Ascending aorta (tissue), 2 donors: ENCODE measurements at regions of chr16 and their contacts with region 1.

Region 1: GRCh38 chr16:48623304-48624016 is 13.5 kb upstream of the N4BP1 start:
- DNase-seq: peak; percentile 46 to 89
- H3K4me3 ChIP-seq: peak overlapping the region; percentile 46 to 59
- H3K27ac ChIP-seq: peak overlapping the region; percentile 48 to 60
- H3K4me1 ChIP-seq: peaks cover 0 to 8% of the 10 kb centered on the region in 2 donors
- H3K27me3 ChIP-seq: no peaks in the 10 kb centered on the region
- CTCF ChIP-seq: peak; percentile 92 to 100 (median 99)

Region 2: DNA sequence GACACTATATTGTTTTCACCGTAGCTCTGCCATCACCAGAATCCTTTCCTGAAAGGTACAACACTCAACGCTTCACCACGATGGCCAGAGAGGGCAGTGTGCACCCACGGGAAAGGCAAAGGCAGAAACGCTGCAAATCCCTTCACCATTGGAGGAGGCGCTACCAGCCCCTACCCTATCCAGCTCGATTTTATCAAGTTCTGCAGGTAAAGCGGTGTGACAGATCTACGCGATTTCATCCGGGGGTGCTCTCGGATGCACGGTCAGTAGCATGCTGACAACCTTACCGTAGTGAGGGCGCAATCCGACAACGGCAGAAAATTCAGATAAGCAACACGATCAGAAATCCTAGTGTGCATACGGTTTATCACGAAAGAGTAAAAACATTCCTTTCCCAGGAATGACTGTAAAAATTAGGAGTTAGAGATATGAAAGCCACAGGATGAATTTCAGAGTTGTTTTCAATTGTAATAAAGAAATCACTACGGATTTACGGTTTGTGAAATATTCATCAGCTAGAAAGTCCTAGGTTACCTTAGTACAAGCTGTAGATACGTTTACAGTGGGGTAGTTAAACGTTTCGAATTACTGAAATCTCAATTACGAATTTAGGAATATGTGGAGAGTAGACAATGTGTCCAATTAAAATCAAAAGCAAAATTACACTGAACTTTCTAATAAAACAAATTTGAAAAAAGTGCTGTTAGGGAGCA is 1481.5 kb before region 1 on chr16:
- intact Hi-C with region 1: loop called (anchors 5 kb)
- DNase-seq: peak; percentile 35 to 83
- H3K4me3 ChIP-seq: peak overlapping the region; percentile 44 to 77
- H3K27ac ChIP-seq: no peak overlapping the region
- H3K4me1 ChIP-seq: peaks cover 9% of the 10 kb centered on the region in 2 donors
- H3K27me3 ChIP-seq: no peaks in the 10 kb centered on the region
- CTCF ChIP-seq: peak; percentile 73 to 89 (median 78)

Region 3: GRCh38 chr16:48246066-48246465 is 377.4 kb before region 1 on chr16:
- intact Hi-C with region 1: no loop called
- DNase-seq: no peak
- H3K4me3 ChIP-seq: peak overlapping the region in 1 of 2 donors; percentile 75
- H3K27ac ChIP-seq: no peak overlapping the region
- H3K4me1 ChIP-seq: peaks cover 0 to 24% of the 10 kb centered on the region in 2 donors
- H3K27me3 ChIP-seq: no peaks in the 10 kb centered on the region
- CTCF ChIP-seq: no peak

Region 4: DNA sequence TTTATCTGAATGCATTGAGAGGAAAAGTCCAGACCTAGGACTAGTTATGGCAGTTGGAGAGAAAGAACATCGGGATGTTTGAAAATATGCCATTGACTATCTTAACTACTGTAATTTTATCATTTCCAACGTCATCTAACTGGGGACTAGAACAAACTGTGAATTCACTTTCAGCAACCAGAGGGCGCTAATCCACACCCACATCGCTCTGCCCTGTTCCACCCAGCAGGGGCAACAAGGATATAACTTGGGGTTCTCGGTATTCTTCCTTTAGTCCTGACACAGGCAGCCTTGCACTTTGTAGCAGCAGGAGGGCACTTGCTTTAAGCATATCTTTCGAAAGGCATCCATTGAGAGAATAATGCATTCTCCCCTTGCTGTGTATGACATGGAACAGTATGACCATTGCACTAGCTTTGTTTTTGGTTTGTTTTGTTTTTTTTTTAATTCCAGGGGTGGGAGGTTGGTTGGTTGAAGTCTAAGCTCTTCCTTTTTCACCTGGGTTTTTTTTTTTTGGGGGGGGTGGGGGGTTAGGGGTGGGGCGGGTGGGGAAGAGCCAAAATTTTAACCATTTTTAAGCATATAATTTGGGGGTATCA is 269.8 kb before region 1 on chr16:
- intact Hi-C with region 1: loop called (anchors 2 kb)
- DNase-seq: peak in 1 of 2 donors; percentile 75
- H3K4me3 ChIP-seq: no peak overlapping the region
- H3K27ac ChIP-seq: no peak overlapping the region
- H3K4me1 ChIP-seq: peaks cover 0 to 3% of the 10 kb centered on the region in 2 donors
- H3K27me3 ChIP-seq: no peaks in the 10 kb centered on the region
- CTCF ChIP-seq: peak; percentile 71 to 86 (median 82)

Region 5: DNA sequence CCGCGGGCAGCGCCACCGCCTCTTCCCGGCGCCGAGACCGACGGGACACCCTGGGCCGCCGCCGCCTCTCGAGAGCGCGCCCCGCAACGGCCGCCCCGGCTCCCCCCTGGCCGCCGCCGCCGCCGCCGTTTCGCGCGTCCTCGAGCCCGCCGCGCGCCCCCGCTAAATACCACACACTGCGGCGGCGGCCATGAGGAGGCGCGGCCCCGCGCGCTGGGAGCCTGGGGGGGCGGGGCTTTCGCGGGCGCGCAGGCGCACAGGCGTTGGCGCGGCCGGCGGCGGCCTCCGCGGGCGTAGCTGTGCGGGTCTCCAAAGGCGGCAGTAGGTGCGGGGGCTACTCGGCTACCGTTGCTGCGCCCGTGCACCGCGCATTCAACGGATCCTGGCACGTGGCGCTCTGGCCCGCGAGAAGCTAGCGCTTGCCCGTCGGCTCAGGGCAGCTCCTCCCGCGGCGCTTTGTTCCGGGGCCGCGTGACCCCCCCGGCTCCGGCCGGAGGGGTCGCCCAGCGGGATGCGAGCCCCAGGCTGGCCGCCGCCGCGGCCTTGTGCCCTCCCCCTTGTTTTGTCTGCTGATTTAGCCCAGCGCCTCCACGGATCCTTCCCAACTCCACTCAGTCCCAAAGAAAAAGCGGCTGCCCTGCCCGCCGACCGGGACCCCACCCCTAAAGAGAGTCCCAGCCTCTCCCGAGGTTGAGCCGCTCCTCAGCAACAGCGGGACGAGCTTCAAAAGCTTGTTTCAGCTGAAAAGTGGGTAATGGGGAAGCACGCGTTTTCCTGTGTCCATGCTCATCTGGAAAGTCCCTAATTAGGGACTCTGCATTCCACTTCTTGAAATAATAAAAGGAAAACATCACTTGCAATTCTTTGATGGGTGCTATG is 237.9 kb before region 1 on chr16 and contains the start of gene SIAH1:
- intact Hi-C with region 1: loop called (anchors 1 kb)
- DNase-seq: peak; percentile 22 to 90
- H3K4me3 ChIP-seq: peak within 1 kb of the TSS; percentile 96 to 100
- H3K27ac ChIP-seq: peak within 1 kb of the TSS; percentile 96 to 100
- H3K4me1 ChIP-seq: peaks cover 9 to 22% of the 10 kb centered on the region in 2 donors
- H3K27me3 ChIP-seq: no peaks in the 10 kb centered on the region
- CTCF ChIP-seq: peak in 1 of 3 experiments; percentile 7
- total RNA-seq, gene SIAH1: 11.3 TPM

Region 6: GRCh38 chr16:48609652-48610029 is 13.8 kb before region 1 on chr16:
- intact Hi-C with region 1: loop called (anchors 2 kb)
- DNase-seq: no peak
- H3K4me3 ChIP-seq: peak overlapping the region; percentile 88 to 99
- H3K27ac ChIP-seq: peak overlapping the region; percentile 91 to 95
- H3K4me1 ChIP-seq: peaks cover 4 to 18% of the 10 kb centered on the region in 2 donors
- H3K27me3 ChIP-seq: no peaks in the 10 kb centered on the region
- CTCF ChIP-seq: no peak